Aorta (tissue), 5 donors: ENCODE measurements at regions of chr1 and their contacts with region 1.

Region 1: GRCh38 chr1:42335050-42335808 is at the start of gene FOXJ3:
- DNase-seq: peak; percentile 95 to 97
- ATAC-seq: peak; percentile 96
- H3K4me3 ChIP-seq: peak within 1 kb of the TSS; percentile 79 to 94
- H3K27ac ChIP-seq: peak within 1 kb of the TSS; percentile 64 to 68
- H3K4me1 ChIP-seq: peaks cover 0 to 2% of the 10 kb centered on the region in 2 donors
- H3K27me3 ChIP-seq: no peaks in the 10 kb centered on the region
- total RNA-seq, gene FOXJ3: 44.4 to 64.2 TPM

Region 2: GRCh38 chr1:42173155-42173933 is 161.9 kb before region 1 on chr1:
- intact Hi-C with region 1: loop called in 1 of 2 experiments (anchors 10 kb)
- DNase-seq: peak; percentile 60 to 84
- ATAC-seq: peak; percentile 77
- H3K4me3 ChIP-seq: no peak overlapping the region
- H3K27ac ChIP-seq: no peak overlapping the region
- H3K4me1 ChIP-seq: no peaks in the 10 kb centered on the region
- H3K27me3 ChIP-seq: no peaks in the 10 kb centered on the region

Region 3: GRCh38 chr1:42439940-42440339 is 104.7 kb after region 1 on chr1:
- intact Hi-C with region 1: no loop called
- DNase-seq: no peak
- ATAC-seq: no peak
- H3K4me3 ChIP-seq: no peak overlapping the region
- H3K27ac ChIP-seq: no peak overlapping the region
- H3K4me1 ChIP-seq: no peaks in the 10 kb centered on the region
- H3K27me3 ChIP-seq: no peaks in the 10 kb centered on the region

Region 4: DNA sequence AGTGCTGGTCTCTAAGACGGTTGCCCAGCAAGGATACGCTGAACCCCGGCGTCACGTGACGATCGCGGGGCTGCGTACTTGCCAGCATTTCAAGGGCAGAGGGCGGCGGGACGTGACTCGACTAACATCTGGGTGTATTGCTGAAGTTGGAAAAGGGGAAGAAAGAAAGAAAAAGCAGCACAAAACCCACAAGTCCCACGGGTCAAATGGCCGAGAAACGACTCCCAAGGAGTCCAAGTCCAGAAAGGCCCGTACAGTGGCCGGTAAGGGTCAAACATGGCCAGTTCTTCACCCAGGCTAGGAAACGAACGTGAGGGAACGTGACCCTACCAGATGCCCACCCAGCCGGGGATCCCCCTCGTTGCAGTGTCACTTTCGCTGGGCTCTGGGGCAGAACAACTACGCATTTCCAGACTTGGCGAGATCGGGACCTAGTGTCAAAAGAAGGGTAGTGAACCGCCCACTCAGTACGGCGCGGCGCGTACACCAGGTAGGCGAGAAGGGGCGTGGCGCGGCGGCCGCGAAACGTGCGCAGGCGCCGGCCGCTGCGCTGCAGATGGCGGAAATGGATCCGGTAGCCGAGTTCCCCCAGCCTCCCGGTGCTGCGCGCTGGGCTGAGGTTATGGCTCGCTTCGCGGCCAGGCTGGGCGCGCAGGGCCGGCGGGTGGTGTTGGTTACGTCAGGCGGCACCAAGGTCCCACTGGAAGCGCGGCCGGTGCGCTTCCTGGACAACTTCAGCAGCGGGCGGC is 121.0 kb after region 1 on chr1 and contains the starts of genes PPCS and ZMYND12:
- intact Hi-C with region 1: loop called (anchors 2 to 5 kb)
- DNase-seq: peak; percentile 93 to 94
- ATAC-seq: peak; percentile 97
- H3K4me3 ChIP-seq: peak within 1 kb of the TSS; percentile 58 to 65
- H3K27ac ChIP-seq: peak within 1 kb of the TSS in 1 of 2 donors; percentile 38
- H3K4me1 ChIP-seq: no peaks in the 10 kb centered on the region
- H3K27me3 ChIP-seq: no peaks in the 10 kb centered on the region
- total RNA-seq, gene PPCS: 33.7 to 41.8 TPM
- total RNA-seq, gene ZMYND12: 1.1 TPM in 1 of 2 donors, not detected in the other

Region 5: GRCh38 chr1:42681741-42682483 is 346.7 kb after region 1 on chr1 and contains the start of gene YBX1:
- intact Hi-C with region 1: loop called in 1 of 2 experiments (anchors 5 kb)
- DNase-seq: peak; percentile 97
- ATAC-seq: peak; percentile 99
- H3K4me3 ChIP-seq: peak within 1 kb of the TSS; percentile 95 to 96
- H3K27ac ChIP-seq: peak within 1 kb of the TSS in 1 of 2 donors; percentile 83
- H3K4me1 ChIP-seq: peaks cover 8 to 11% of the 10 kb centered on the region in 2 donors
- H3K27me3 ChIP-seq: no peaks in the 10 kb centered on the region
- total RNA-seq, gene YBX1: 393 to 498 TPM

Region 6: DNA sequence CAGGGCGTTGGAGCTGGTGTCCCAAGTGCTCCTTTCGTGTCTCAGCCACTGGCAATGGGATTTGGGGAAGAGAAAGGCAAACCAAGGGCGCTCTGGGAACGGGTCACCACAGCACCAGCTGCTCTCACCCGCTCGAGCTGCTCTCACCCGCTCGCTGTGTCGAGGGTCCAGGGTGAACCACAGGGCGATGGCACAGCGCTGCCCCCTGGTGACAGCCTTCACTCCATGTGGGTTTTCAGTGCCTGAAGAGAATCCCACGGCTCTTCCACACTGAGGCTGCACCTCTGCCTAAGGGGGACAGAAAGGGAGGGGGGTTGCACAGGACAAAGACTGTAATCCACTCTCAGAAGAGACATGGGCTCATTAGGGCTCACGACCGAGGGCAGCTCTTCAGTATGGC is 411.9 kb after region 1 on chr1:
- intact Hi-C with region 1: loop called in 1 of 2 experiments (anchors 10 kb)
- DNase-seq: no peak
- ATAC-seq: peak; percentile 46
- H3K4me3 ChIP-seq: no peak overlapping the region
- H3K27ac ChIP-seq: no peak overlapping the region
- H3K4me1 ChIP-seq: no peaks in the 10 kb centered on the region
- H3K27me3 ChIP-seq: no peaks in the 10 kb centered on the region